CD8-positive, alpha-beta T cell (primary cell): ENCODE measurements at regions of chr15 and their contacts with region 1.

Region 1: DNA sequence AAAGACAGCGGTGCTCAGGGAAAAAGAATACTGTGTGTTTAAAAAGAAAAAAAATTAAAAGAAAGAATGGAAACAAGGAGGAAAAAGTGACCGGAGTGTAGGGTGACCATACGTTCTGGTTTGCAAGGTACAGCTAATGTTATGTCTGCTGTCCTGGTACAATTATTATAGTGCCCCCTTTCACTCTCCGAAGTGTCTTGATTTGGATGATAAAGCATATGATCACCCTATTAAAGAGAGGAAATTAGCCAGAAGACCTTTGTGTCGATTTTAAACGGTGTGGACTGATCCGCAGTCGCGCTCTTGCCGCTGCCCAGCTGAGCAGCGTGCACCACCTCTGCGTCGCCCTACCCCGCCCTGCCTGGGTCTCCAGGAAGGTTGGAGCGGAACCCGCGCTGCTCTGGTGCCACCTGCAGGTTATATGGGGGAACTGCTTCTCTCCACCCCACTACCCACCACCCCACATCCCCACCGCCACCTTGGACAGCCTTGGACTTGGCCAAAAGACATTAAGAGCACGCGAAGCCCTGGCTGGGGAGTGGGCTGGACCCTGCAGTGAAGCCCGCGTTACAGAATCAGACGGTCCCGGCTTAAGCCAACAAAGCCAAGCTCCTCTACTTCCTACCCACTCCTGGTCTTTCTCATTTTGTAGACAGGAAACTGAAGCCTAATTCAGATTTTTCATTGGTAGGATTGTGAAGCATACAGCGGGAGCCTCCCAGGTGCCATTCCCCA is 41.2 kb upstream of the UBE2Q2 start:
- DNase-seq: peak; percentile 53 to 86 (median 78)
- ATAC-seq: peak; percentile 100
- H3K4me3 ChIP-seq: no peak overlapping the region
- H3K4me3 Mint-ChIP-seq: peak overlapping the region; percentile 58
- H3K27ac ChIP-seq: no peak overlapping the region
- H3K27ac Mint-ChIP-seq: no peak overlapping the region
- H3K4me1 ChIP-seq: peaks cover 5% of the 10 kb centered on the region
- H3K4me1 Mint-ChIP-seq: peaks cover 3% of the 10 kb centered on the region
- H3K27me3 ChIP-seq: peaks cover 0 to 10% of the 10 kb centered on the region in 2 experiments
- H3K27me3 Mint-ChIP-seq: peaks cover 31% of the 10 kb centered on the region
- CTCF ChIP-seq: peak; percentile 75

Region 2: DNA sequence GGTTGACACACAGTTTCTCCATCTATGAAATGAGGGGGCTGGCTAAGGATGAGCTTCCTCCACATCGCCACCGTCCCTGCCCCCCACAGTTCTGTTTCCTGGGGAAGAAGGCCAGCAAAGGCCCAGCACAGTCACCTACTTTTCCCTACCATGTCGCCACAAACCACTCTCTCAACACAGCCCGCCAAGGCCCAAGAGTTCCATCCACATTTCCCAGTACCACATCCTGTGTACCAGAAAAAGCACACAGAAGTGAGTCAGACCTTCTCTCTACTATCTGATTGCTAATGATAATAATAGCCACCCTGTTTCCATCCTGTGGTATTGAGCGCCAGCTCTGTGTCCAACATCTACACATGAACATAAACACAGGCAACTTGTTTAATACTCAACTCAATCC is 630.6 kb before region 1 on chr15:
- CTCF ChIA-PET with region 1: no interaction called
- POLR2A ChIA-PET with region 1: no interaction called
- intact Hi-C with region 1: no loop called
- DNase-seq: no peak
- ATAC-seq: no peak
- H3K4me3 ChIP-seq: no peak overlapping the region
- H3K4me3 Mint-ChIP-seq: no peak overlapping the region
- H3K27ac ChIP-seq: no peak overlapping the region
- H3K27ac Mint-ChIP-seq: no peak overlapping the region
- H3K4me1 ChIP-seq: no peaks in the 10 kb centered on the region
- H3K4me1 Mint-ChIP-seq: peaks cover 3% of the 10 kb centered on the region
- H3K27me3 ChIP-seq: no peaks in the 10 kb centered on the region
- H3K27me3 Mint-ChIP-seq: peaks cover 6% of the 10 kb centered on the region
- CTCF ChIP-seq: no peak

Region 3: GRCh38 chr15:75508840-75509532 is 293.0 kb before region 1 on chr15:
- CTCF ChIA-PET with region 1: no interaction called
- POLR2A ChIA-PET with region 1: no interaction called
- intact Hi-C with region 1: loop called (anchors 2 to 5 kb)
- DNase-seq: peak in 5 of 9 experiments; percentile 11 to 64 (median 26)
- ATAC-seq: peak; percentile 54
- H3K4me3 ChIP-seq: no peak overlapping the region
- H3K4me3 Mint-ChIP-seq: no peak overlapping the region
- H3K27ac ChIP-seq: no peak overlapping the region
- H3K27ac Mint-ChIP-seq: peak overlapping the region; percentile 50
- H3K4me1 ChIP-seq: no peaks in the 10 kb centered on the region
- H3K4me1 Mint-ChIP-seq: peaks cover 5% of the 10 kb centered on the region
- H3K27me3 ChIP-seq: no peaks in the 10 kb centered on the region
- H3K27me3 Mint-ChIP-seq: no peaks in the 10 kb centered on the region
- CTCF ChIP-seq: peak; percentile 54

Region 4: GRCh38 chr15:75684642-75685041 is 117.4 kb before region 1 on chr15:
- CTCF ChIA-PET with region 1: interaction called, 12 read pairs
- POLR2A ChIA-PET with region 1: no interaction called
- intact Hi-C with region 1: loop called in 1 of 2 experiments (anchors 1 kb)
- DNase-seq: no peak
- ATAC-seq: no peak
- H3K4me3 ChIP-seq: no peak overlapping the region
- H3K4me3 Mint-ChIP-seq: no peak overlapping the region
- H3K27ac ChIP-seq: no peak overlapping the region
- H3K27ac Mint-ChIP-seq: no peak overlapping the region
- H3K4me1 ChIP-seq: no peaks in the 10 kb centered on the region
- H3K4me1 Mint-ChIP-seq: peaks cover 2% of the 10 kb centered on the region
- H3K27me3 ChIP-seq: no peaks in the 10 kb centered on the region
- H3K27me3 Mint-ChIP-seq: no peaks in the 10 kb centered on the region
- CTCF ChIP-seq: no peak

Region 5: GRCh38 chr15:75723847-75724660 is 78.0 kb before region 1 on chr15:
- CTCF ChIA-PET with region 1: interaction called, 85 read pairs
- POLR2A ChIA-PET with region 1: interaction called, 3 read pairs
- intact Hi-C with region 1: loop called (anchors 1 kb)
- DNase-seq: peak in 5 of 9 experiments; percentile 15 to 57 (median 23)
- ATAC-seq: no peak
- H3K4me3 ChIP-seq: no peak overlapping the region
- H3K4me3 Mint-ChIP-seq: no peak overlapping the region
- H3K27ac ChIP-seq: no peak overlapping the region
- H3K27ac Mint-ChIP-seq: no peak overlapping the region
- H3K4me1 ChIP-seq: no peaks in the 10 kb centered on the region
- H3K4me1 Mint-ChIP-seq: no peaks in the 10 kb centered on the region
- H3K27me3 ChIP-seq: no peaks in the 10 kb centered on the region
- H3K27me3 Mint-ChIP-seq: peaks cover 16% of the 10 kb centered on the region
- CTCF ChIP-seq: no peak

Region 6: GRCh38 chr15:75738647-75739331 is 63.2 kb before region 1 on chr15:
- CTCF ChIA-PET with region 1: interaction called, 12 read pairs
- POLR2A ChIA-PET with region 1: interaction called, 4 read pairs
- intact Hi-C with region 1: no loop called
- DNase-seq: peak; percentile 70 to 92 (median 89)
- ATAC-seq: peak; percentile 91
- H3K4me3 ChIP-seq: peak overlapping the region; percentile 67 to 79
- H3K4me3 Mint-ChIP-seq: peak overlapping the region; percentile 84
- H3K27ac ChIP-seq: peak overlapping the region in 1 of 2 experiments; percentile 51
- H3K27ac Mint-ChIP-seq: peak overlapping the region; percentile 70
- H3K4me1 ChIP-seq: peaks cover 14% of the 10 kb centered on the region
- H3K4me1 Mint-ChIP-seq: peaks cover 14% of the 10 kb centered on the region
- H3K27me3 ChIP-seq: peaks cover 0 to 4% of the 10 kb centered on the region in 2 experiments
- H3K27me3 Mint-ChIP-seq: peaks cover 3% of the 10 kb centered on the region
- CTCF ChIP-seq: no peak

Region 7: GRCh38 chr15:75785771-75786574 is 16.1 kb before region 1 on chr15:
- CTCF ChIA-PET with region 1: no interaction called
- POLR2A ChIA-PET with region 1: no interaction called
- intact Hi-C with region 1: no loop called
- DNase-seq: peak in 2 of 9 experiments; percentile 20 to 40
- ATAC-seq: no peak
- H3K4me3 ChIP-seq: no peak overlapping the region
- H3K4me3 Mint-ChIP-seq: no peak overlapping the region
- H3K27ac ChIP-seq: no peak overlapping the region
- H3K27ac Mint-ChIP-seq: no peak overlapping the region
- H3K4me1 ChIP-seq: no peaks in the 10 kb centered on the region
- H3K4me1 Mint-ChIP-seq: no peaks in the 10 kb centered on the region
- H3K27me3 ChIP-seq: no peaks in the 10 kb centered on the region
- H3K27me3 Mint-ChIP-seq: peaks cover 17% of the 10 kb centered on the region
- CTCF ChIP-seq: no peak

Region 8: GRCh38 chr15:75823860-75824613 is 22.0 kb after region 1 on chr15:
- CTCF ChIA-PET with region 1: interaction called, 15 read pairs
- POLR2A ChIA-PET with region 1: interaction called, 4 read pairs
- intact Hi-C with region 1: no loop called
- DNase-seq: no peak
- ATAC-seq: no peak
- H3K4me3 ChIP-seq: no peak overlapping the region
- H3K4me3 Mint-ChIP-seq: no peak overlapping the region
- H3K27ac ChIP-seq: no peak overlapping the region
- H3K27ac Mint-ChIP-seq: no peak overlapping the region
- H3K4me1 ChIP-seq: no peaks in the 10 kb centered on the region
- H3K4me1 Mint-ChIP-seq: no peaks in the 10 kb centered on the region
- H3K27me3 ChIP-seq: no peaks in the 10 kb centered on the region
- H3K27me3 Mint-ChIP-seq: no peaks in the 10 kb centered on the region
- CTCF ChIP-seq: no peak

Region 9: DNA sequence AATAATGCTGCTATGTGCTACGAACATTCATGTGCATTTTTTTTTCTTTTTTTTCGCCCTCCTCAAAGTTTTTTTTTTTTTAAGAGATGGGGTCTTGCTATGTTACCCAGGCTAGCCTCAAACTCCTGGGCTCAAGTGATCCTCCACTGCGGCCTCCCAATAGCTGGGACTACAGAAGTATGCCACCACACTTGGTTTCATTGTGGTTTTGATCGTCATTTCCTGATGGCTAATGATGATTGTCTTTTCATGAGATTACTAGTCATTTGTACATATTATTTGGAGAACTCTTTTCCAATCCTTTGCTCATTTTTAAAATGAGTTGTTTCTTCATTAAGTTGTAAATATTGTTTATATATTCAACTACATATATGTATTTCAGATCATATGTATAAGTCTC is 150.5 kb after region 1 on chr15:
- CTCF ChIA-PET with region 1: no interaction called
- POLR2A ChIA-PET with region 1: no interaction called
- intact Hi-C with region 1: no loop called
- DNase-seq: no peak
- ATAC-seq: no peak
- H3K4me3 ChIP-seq: no peak overlapping the region
- H3K4me3 Mint-ChIP-seq: no peak overlapping the region
- H3K27ac ChIP-seq: no peak overlapping the region
- H3K27ac Mint-ChIP-seq: no peak overlapping the region
- H3K4me1 ChIP-seq: no peaks in the 10 kb centered on the region
- H3K4me1 Mint-ChIP-seq: no peaks in the 10 kb centered on the region
- H3K27me3 ChIP-seq: no peaks in the 10 kb centered on the region
- H3K27me3 Mint-ChIP-seq: peaks cover 45% of the 10 kb centered on the region
- CTCF ChIP-seq: no peak